ENCODE measurements at regions of chr6 and their contacts with region 1.

Region 1: DNA sequence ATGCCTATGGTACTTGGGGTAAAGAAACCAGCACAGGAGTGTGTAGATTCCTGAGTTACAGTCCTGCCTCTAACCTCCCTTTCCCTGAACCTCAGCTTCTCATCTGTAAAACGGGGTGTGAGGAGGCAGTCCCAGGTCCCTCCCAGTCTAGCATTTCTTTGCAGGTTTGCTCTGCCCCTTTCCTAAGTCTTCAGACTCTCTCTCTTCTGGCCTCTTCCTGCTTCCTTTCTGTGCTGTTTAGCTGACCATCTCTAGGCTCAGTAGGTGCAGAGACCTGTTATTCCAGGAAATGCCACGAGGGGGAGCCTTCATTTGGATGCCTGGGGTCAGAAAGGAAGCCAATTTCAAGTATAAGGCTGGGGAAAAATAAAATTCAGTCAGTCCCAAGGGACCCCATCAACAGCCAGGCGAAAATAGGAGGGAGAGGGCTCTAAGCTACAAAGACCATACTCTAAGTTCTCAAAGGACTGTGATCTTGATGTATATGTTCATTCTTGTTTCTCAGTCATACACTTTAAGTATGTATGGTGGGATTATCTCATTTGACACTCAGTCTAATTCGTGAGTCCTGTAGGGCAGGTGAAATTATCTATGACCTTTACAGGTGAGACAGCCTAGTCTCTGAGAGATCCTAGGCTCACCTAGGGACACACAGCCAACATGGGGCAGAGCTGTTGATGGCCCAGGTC is 89.1 kb downstream of the NCR2 start:
- DNase-seq: peak; percentile 63 to 74 (median 68)
- H3K4me3 ChIP-seq: no peak overlapping the region
- H3K4me3 Mint-ChIP-seq: no peak overlapping the region
- H3K27ac ChIP-seq: no peak overlapping the region
- H3K27ac Mint-ChIP-seq: no peak overlapping the region
- H3K4me1 ChIP-seq: peaks cover 31% of the 10 kb centered on the region
- H3K4me1 Mint-ChIP-seq: peaks cover 5 to 9% (median 8%) of the 10 kb centered on the region in 4 donors
- H3K27me3 ChIP-seq: peaks cover 10% of the 10 kb centered on the region
- H3K27me3 Mint-ChIP-seq: peaks cover 10 to 15% of the 10 kb centered on the region in 2 donors

Region 2: GRCh38 chr6:41367700-41368099 is 56.8 kb before region 1 on chr6:
- CTCF ChIA-PET with region 1: interaction called, 5 read pairs
- POLR2A ChIA-PET with region 1: no interaction called
- intact Hi-C with region 1: loop called (anchors 1 kb)
- DNase-seq: no peak
- H3K4me3 ChIP-seq: no peak overlapping the region
- H3K4me3 Mint-ChIP-seq: no peak overlapping the region
- H3K27ac ChIP-seq: no peak overlapping the region
- H3K27ac Mint-ChIP-seq: peak overlapping the region in 1 of 7 donors; percentile 8
- H3K4me1 ChIP-seq: peaks cover 19% of the 10 kb centered on the region
- H3K4me1 Mint-ChIP-seq: peaks cover 17 to 27% (median 21%) of the 10 kb centered on the region in 4 donors
- H3K27me3 ChIP-seq: peaks cover 29% of the 10 kb centered on the region
- H3K27me3 Mint-ChIP-seq: peaks cover 38 to 42% of the 10 kb centered on the region in 2 donors

Region 3: DNA sequence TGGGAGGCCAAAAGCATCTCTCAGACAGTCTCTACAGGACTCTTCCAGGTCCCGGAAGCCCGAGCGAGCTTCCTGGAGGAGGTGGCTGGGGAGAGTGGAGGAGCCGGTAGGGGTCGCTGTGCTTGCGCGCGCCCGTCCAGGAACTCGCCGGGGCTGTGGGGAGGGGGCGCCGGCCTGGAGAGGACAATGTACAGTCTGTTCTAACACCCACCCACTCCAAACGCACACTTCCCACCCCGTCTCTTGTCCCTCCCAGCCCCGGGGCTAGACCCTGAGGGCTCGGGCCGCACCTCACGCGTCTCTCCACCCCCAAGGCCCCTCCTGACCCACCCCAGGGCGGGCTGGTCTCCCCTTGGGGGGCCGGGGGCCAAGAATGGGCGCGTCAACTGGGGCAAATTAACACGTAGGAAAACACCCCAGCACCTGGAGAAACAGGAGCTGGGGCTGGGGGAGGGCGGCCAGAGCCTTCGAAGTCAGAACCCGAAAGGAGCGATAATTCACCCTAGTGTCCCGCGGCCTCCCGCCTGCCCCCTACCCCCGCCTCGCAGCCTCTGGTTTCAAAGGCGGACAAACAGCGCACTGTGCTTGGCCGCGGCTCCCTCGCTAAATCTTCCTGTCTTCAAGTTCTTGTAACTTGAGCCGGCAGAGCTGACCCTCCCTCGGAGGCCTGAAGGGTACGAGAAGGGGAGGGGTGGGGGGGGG is 18.4 kb after region 1 on chr6:
- CTCF ChIA-PET with region 1: interaction called, 21 read pairs
- POLR2A ChIA-PET with region 1: interaction called, 3 read pairs
- intact Hi-C with region 1: no loop called
- DNase-seq: no peak
- H3K4me3 ChIP-seq: no peak overlapping the region
- H3K4me3 Mint-ChIP-seq: peak overlapping the region in 5 of 8 donors; percentile 20 to 73 (median 65)
- H3K27ac ChIP-seq: no peak overlapping the region
- H3K27ac Mint-ChIP-seq: peak overlapping the region in 5 of 7 donors; percentile 22 to 70 (median 61)
- H3K4me1 ChIP-seq: peaks cover 44% of the 10 kb centered on the region
- H3K4me1 Mint-ChIP-seq: peaks cover 31 to 51% (median 45%) of the 10 kb centered on the region in 4 donors
- H3K27me3 ChIP-seq: no peaks in the 10 kb centered on the region
- H3K27me3 Mint-ChIP-seq: peaks cover 2 to 9% of the 10 kb centered on the region in 2 donors

Region 4: GRCh38 chr6:41453244-41453643 is 28.7 kb after region 1 on chr6:
- CTCF ChIA-PET with region 1: interaction called, 10 read pairs
- POLR2A ChIA-PET with region 1: no interaction called
- intact Hi-C with region 1: no loop called
- DNase-seq: no peak
- H3K4me3 ChIP-seq: no peak overlapping the region
- H3K4me3 Mint-ChIP-seq: no peak overlapping the region
- H3K27ac ChIP-seq: no peak overlapping the region
- H3K27ac Mint-ChIP-seq: no peak overlapping the region
- H3K4me1 ChIP-seq: peaks cover 11% of the 10 kb centered on the region
- H3K4me1 Mint-ChIP-seq: peaks cover 0 to 14% (median 7%) of the 10 kb centered on the region in 4 donors
- H3K27me3 ChIP-seq: no peaks in the 10 kb centered on the region
- H3K27me3 Mint-ChIP-seq: peaks cover 3 to 4% of the 10 kb centered on the region in 2 donors

Region 5: DNA sequence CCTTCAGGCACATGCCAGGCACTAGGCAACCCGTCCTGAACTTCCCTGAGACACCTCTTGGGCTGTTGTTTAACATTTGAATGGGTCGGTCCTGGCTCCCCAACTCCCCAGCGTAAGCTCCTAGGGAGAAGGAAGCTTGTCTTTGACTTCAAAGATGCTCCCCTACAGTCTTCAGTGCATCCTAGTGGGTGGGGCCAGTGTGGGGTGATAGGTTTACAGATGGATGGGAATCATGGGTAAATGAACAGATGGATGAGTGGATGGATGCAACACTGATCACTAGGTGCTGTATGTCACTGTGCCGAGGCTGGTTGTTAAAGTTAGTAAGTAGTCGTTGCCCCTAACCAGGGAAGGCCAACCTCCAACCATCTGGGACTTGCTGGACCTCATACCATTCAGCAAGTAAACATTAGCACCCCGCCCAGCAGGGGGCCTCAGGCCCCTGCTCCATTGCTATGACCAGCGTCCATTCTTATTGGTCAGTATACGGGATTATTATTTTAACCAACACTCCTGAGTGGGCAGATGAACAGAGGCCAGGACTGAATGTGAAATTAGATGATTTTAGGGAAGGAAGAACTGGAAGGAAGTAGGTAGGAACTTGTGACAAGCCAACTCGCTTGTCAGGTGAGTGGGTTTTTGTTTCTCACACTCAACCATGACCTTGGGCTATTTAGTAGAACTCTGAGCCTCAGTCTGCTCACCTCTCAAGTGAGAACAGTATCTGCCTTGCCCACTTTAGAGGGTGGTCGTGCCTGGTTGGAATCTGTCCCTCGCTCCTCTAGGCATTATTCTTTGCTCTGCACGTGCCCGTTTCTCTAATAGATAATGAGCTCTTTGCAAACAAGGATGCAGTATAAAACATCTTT is 38.8 kb after region 1 on chr6:
- CTCF ChIA-PET with region 1: interaction called, 13 read pairs
- POLR2A ChIA-PET with region 1: no interaction called
- intact Hi-C with region 1: no loop called
- DNase-seq: no peak
- H3K4me3 ChIP-seq: no peak overlapping the region
- H3K4me3 Mint-ChIP-seq: no peak overlapping the region
- H3K27ac ChIP-seq: no peak overlapping the region
- H3K27ac Mint-ChIP-seq: peak overlapping the region in 1 of 7 donors; percentile 27
- H3K4me1 ChIP-seq: no peaks in the 10 kb centered on the region
- H3K4me1 Mint-ChIP-seq: peaks cover 0 to 3% (median 0%) of the 10 kb centered on the region in 4 donors
- H3K27me3 ChIP-seq: peaks cover 2% of the 10 kb centered on the region
- H3K27me3 Mint-ChIP-seq: peaks cover 25 to 44% of the 10 kb centered on the region in 2 donors

Region 6: DNA sequence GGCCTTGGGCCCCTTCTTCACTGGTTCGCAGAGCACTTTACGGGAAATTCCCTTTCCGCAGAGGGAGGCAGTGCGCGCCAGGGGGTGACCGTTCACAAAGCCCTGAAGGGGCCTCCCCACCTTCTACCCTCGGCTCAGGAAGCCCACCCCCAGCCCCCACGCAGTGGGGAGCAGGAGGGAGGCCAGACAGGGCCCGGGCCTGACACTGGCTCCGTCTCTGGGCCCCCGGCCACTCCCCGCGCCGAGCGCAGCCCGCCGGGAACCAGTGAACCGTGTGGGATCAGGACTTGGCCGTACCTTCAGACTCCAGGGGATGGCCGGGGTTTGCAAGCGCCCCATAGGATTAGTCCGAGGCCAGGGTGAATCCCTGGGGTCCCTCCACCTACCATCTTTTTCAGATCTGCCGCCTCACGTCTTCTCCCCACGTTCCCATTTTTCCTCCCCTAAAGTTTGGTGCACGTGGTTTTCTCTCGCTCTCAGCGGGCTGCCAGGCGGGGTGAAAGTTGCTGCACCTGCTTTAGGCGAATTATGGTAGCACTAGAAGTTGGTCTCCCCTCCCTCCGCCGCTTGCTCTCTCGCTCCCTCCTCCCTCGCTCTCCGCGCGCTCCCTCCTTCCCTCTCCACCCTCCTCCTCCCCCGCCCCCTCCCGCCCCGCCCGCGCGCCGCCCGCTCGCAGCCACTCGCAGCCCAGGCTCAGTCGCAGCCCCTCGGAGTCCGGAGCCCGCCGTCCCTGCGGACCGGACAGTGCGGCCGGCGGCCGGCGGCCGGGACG is 121.4 kb after region 1 on chr6 and contains the start of gene FOXP4:
- CTCF ChIA-PET with region 1: interaction called, 21 read pairs
- POLR2A ChIA-PET with region 1: interaction called, 11 read pairs
- intact Hi-C with region 1: loop called (anchors 1 kb)
- DNase-seq: peak; percentile 80 to 87 (median 81)
- H3K4me3 ChIP-seq: peak within 1 kb of the TSS; percentile 75 to 76
- H3K4me3 Mint-ChIP-seq: peak within 1 kb of the TSS; percentile 90 to 96 (median 92)
- H3K27ac ChIP-seq: no peak within 1 kb of the TSS
- H3K27ac Mint-ChIP-seq: peak within 1 kb of the TSS; percentile 33 to 92 (median 72)
- H3K4me1 ChIP-seq: peaks cover 37% of the 10 kb centered on the region
- H3K4me1 Mint-ChIP-seq: peaks cover 11 to 42% (median 29%) of the 10 kb centered on the region in 4 donors
- H3K27me3 ChIP-seq: peaks cover 17% of the 10 kb centered on the region
- H3K27me3 Mint-ChIP-seq: peaks cover 0 to 2% of the 10 kb centered on the region in 2 donors
- total RNA-seq, gene FOXP4: 7.4 to 7.8 TPM

Region 7: GRCh38 chr6:41591859-41592502 is 167.5 kb after region 1 on chr6:
- CTCF ChIA-PET with region 1: interaction called, 167 read pairs
- POLR2A ChIA-PET with region 1: no interaction called
- intact Hi-C with region 1: loop called (anchors 1 kb)
- DNase-seq: peak; percentile 60 to 75 (median 69)
- H3K4me3 ChIP-seq: no peak overlapping the region
- H3K4me3 Mint-ChIP-seq: no peak overlapping the region
- H3K27ac ChIP-seq: no peak overlapping the region
- H3K27ac Mint-ChIP-seq: peak overlapping the region in 1 of 7 donors; percentile 74
- H3K4me1 ChIP-seq: no peaks in the 10 kb centered on the region
- H3K4me1 Mint-ChIP-seq: peaks cover 0 to 7% (median 2%) of the 10 kb centered on the region in 4 donors
- H3K27me3 ChIP-seq: no peaks in the 10 kb centered on the region
- H3K27me3 Mint-ChIP-seq: no peaks in the 10 kb centered on the region

Region 8: GRCh38 chr6:41941280-41942066 is 517.0 kb after region 1 on chr6 and contains the start of gene CCND3:
- CTCF ChIA-PET with region 1: no interaction called
- POLR2A ChIA-PET with region 1: no interaction called
- intact Hi-C with region 1: no loop called
- DNase-seq: peak; percentile 77 to 86 (median 79)
- H3K4me3 ChIP-seq: peak within 1 kb of the TSS; percentile 75 to 76
- H3K4me3 Mint-ChIP-seq: peak within 1 kb of the TSS; percentile 83 to 99 (median 95)
- H3K27ac ChIP-seq: peak within 1 kb of the TSS; percentile 80
- H3K27ac Mint-ChIP-seq: peak within 1 kb of the TSS; percentile 91 to 96 (median 93)
- H3K4me1 ChIP-seq: peaks cover 77% of the 10 kb centered on the region
- H3K4me1 Mint-ChIP-seq: peaks cover 48 to 80% (median 61%) of the 10 kb centered on the region in 4 donors
- H3K27me3 ChIP-seq: no peaks in the 10 kb centered on the region
- H3K27me3 Mint-ChIP-seq: no peaks in the 10 kb centered on the region
- total RNA-seq, gene CCND3: 223 to 242 TPM